ENCODE measurements at regions of chr1 and their contacts with region 1.

Region 1: DNA sequence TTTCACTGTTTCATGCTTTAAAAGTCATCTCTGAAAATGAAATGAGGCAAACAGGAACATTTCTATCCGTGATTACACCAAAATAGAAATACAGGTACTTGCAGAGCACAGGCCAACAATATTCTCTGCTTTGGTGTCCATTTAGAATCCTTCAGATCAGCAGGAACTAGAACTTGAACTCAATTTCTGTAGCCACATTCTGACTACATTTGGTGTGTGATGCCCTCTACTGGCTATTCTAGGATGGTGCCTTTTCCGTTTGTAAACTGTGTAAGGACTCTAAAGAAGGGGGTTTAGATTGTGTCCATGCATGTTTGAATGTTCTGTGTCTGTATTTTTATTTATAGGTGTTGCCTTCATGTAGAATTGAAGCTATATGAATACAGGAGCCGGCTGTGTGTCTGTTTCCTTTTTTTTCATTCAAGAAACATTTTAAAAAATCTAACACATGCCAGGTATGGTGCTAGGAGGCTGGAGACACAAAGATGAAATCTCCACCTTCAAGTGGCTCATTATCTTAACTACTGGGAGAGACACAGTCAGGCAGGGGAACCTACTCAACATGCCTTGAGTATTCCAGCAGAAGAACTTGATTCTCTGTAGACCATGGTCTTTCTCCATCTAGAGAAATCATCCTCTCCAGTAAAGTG is 7.6 kb upstream of the ZNF326 start:
- DNase-seq: peak in 2 of 4 donors; percentile 55 to 82
- ATAC-seq: peak; percentile 99
- H3K4me3 ChIP-seq: no peak overlapping the region
- H3K27ac ChIP-seq: no peak overlapping the region
- H3K4me1 ChIP-seq: no peaks in the 10 kb centered on the region
- H3K27me3 ChIP-seq: no peaks in the 10 kb centered on the region
- CTCF ChIP-seq: peak; percentile 81 to 85

Region 2: GRCh38 chr1:89632657-89633247 is 354.5 kb before region 1 on chr1 and contains the start of gene LRRC8C:
- intact Hi-C with region 1: loop called in 1 of 2 experiments (anchors 5 kb)
- DNase-seq: peak; percentile 76 to 98 (median 86)
- ATAC-seq: peak; percentile 96
- H3K4me3 ChIP-seq: peak within 1 kb of the TSS; percentile 90 to 96
- H3K27ac ChIP-seq: peak within 1 kb of the TSS; percentile 87 to 91
- H3K4me1 ChIP-seq: peaks cover 5 to 52% of the 10 kb centered on the region in 2 donors
- H3K27me3 ChIP-seq: no peaks in the 10 kb centered on the region
- CTCF ChIP-seq: peak; percentile 40 to 56
- polyA plus RNA-seq, gene LRRC8C: 8.3 to 9.7 (median 9.0) TPM

Region 3: GRCh38 chr1:89804642-89805237 is 182.6 kb before region 1 on chr1:
- intact Hi-C with region 1: loop called (anchors 5 to 10 kb)
- DNase-seq: peak in 3 of 4 donors; percentile 74 to 90 (median 87)
- ATAC-seq: peak; percentile 98
- H3K4me3 ChIP-seq: no peak overlapping the region
- H3K27ac ChIP-seq: no peak overlapping the region
- H3K4me1 ChIP-seq: peaks cover 0 to 4% of the 10 kb centered on the region in 2 donors
- H3K27me3 ChIP-seq: no peaks in the 10 kb centered on the region
- CTCF ChIP-seq: peak; percentile 75 to 86